ENCODE measurements at regions of chr3 and their contacts with region 1.

Region 1: DNA sequence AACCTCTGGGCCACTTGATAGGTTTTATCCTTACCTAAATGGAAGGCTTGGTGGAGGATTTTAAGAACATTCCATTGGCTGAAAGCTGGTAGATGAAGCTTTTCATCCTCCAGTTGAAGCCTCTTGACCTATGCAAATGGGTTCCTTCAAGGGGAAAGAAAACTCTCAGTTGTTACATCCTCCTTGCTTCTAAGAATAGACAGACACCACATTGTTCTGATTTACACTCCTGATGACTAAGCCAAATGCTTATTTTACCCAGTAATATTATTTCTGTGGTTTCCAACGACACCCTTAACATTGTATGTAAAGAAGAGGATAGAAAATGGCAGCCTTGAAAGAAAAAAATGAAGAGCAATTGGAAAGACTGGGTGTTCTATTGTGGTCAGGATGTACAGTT is 480.5 kb downstream of the OTOL1 start:
- DNase-seq: no peak
- ATAC-seq: no peak
- H3K4me3 ChIP-seq: no peak overlapping the region
- H3K27ac ChIP-seq: no peak overlapping the region
- H3K4me1 ChIP-seq: no peaks in the 10 kb centered on the region
- H3K27me3 ChIP-seq: no peaks in the 10 kb centered on the region
- CTCF ChIP-seq: no peak

Region 2: DNA sequence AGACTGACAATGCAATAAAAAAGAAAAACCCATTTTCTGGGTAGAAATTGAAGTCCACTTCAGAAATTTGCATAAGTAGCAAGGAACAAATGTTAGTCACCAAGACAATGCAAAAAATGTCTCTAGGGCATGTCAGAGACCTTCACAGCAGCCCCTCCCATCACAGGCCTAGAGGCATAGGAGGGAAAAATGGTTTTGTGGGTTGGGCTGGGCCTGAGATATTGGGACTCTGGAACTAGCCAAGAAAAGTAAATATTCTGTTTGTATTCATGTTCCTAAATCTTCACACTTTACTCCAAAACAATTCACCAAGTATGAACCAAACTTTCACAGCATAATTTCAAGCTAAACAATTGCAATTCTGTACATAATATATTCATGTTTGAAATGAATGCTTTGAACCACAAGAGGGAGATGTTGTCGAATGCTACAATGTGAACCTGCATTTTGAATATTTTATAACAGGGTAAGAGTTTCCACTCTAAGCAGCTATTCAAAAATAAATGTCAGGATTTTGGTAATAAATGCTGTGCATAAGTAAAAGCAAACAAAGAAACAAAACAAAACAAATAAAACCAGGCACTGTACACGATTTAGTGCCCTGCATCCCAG is 51.2 kb before region 1 on chr3:
- intact Hi-C with region 1: loop called in 1 of 10 experiments (anchors 5 kb)
- DNase-seq: no peak
- ATAC-seq: no peak
- H3K4me3 ChIP-seq: no peak overlapping the region
- H3K27ac ChIP-seq: no peak overlapping the region
- H3K4me1 ChIP-seq: no peaks in the 10 kb centered on the region
- H3K27me3 ChIP-seq: no peaks in the 10 kb centered on the region
- CTCF ChIP-seq: peak in 2 of 9 donors; percentile 13 to 16